AG04449 (cell line): ENCODE measurements at regions of chr15 and their contacts with region 1.

Region 1: GRCh38 chr15:84929744-84930371 is 45.4 kb downstream of the SLC28A1 start:
- DNase-seq: no peak
- H3K4me3 ChIP-seq: no peak overlapping the region
- CTCF ChIP-seq: no peak

Region 2: GRCh38 chr15:84600851-84601838 is 328.7 kb before region 1 on chr15 and contains the start of gene ZSCAN2:
- CTCF ChIA-PET with region 1: interaction called, 95 read pairs
- POLR2A ChIA-PET with region 1: no interaction called
- DNase-seq: peak; percentile 38
- H3K4me3 ChIP-seq: peak within 1 kb of the TSS; percentile 97
- CTCF ChIP-seq: no peak

Region 3: DNA sequence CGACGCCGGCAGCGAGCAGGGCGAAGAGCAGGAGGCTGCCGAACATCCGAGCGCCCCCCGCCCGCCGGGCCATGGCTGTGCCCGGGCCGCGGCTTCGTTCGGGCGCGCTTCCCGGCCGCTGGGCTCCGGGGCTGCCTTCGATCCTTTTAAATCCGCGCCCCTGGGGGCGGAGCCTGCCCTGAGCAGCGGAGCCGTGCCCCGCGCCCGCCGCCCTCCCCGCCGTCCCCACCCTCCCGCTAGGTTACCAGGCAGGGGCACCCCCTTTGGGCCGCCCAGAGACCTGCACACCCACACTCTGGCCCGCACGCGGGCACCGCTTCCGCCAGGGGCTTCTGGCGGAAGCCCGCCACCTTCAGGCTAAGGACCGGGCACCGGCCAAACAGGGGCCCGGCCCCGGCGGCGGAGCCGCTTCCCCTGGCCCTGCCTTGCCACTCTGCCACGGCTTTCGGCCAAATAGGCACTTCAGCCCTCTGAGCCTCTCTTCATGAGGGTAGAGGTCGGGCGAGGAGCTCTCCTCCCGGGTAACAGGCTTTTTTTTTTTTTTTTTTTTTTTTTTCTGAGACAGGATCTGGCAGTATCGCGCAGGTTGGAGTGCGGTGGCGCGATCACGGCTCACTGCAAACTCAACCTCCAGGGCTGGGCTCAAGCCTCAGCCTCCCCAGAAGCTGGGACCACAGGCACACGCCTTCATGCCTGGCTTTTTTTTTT is 271.6 kb before region 1 on chr15 and contains the start of gene NMB:
- CTCF ChIA-PET with region 1: interaction called, 29 read pairs
- POLR2A ChIA-PET with region 1: interaction called, 3 read pairs
- DNase-seq: no peak
- H3K4me3 ChIP-seq: peak within 1 kb of the TSS; percentile 57
- CTCF ChIP-seq: peak; percentile 71

Region 4: GRCh38 chr15:84911879-84912660 is 17.8 kb before region 1 on chr15:
- CTCF ChIA-PET with region 1: interaction called, 13 read pairs
- POLR2A ChIA-PET with region 1: no interaction called
- DNase-seq: peak; percentile 92
- H3K4me3 ChIP-seq: no peak overlapping the region
- CTCF ChIP-seq: no peak

Region 5: GRCh38 chr15:85011160-85011571 is 81.3 kb after region 1 on chr15:
- CTCF ChIA-PET with region 1: no interaction called
- POLR2A ChIA-PET with region 1: no interaction called
- DNase-seq: no peak
- H3K4me3 ChIP-seq: no peak overlapping the region
- CTCF ChIP-seq: no peak

Region 6: DNA sequence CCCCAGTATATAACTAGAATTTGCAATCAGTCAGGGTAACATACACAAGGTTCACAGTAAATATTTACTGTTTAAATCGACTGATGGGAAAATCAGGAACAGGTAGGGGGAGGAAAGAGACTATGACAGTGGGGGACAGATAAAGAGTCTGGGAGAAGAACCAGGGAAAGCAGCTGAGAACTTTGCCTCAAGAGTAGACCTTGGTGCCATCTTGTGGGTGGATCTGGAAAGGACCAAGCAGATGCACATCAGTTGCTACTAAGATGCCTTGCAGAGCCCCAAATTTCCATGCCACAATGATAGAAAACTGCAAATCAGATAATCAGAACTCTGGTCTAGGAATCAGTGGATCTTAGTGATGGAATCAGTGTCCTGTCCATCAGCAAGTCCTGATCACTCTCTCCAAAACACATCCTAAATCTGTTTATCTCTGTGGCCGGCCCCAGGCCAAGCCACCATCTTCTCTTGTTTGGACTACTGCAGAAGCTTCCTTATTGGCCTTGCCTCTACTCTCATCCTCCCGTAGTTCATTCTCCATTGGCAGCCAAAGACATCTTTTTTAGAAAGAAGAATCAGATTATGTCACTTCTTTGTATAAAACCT is 114.5 kb after region 1 on chr15:
- CTCF ChIA-PET with region 1: interaction called, 29 read pairs
- POLR2A ChIA-PET with region 1: no interaction called
- DNase-seq: no peak
- H3K4me3 ChIP-seq: no peak overlapping the region
- CTCF ChIP-seq: peak; percentile 78

Region 7: GRCh38 chr15:85164809-85165463 is 235.1 kb after region 1 on chr15:
- CTCF ChIA-PET with region 1: no interaction called
- POLR2A ChIA-PET with region 1: no interaction called
- DNase-seq: no peak
- H3K4me3 ChIP-seq: no peak overlapping the region
- CTCF ChIP-seq: no peak